ENCODE measurements at regions of chr15 and their contacts with region 1.

Region 1: GRCh38 chr15:89171136-89172072 is 50.0 kb downstream of the RLBP1 start:
- DNase-seq: peak in 1 of 2 donors; percentile 58
- ATAC-seq: no peak
- H3K4me3 ChIP-seq: no peak overlapping the region
- H3K27ac ChIP-seq: peak overlapping the region in 2 of 4 donors; percentile 6 to 61
- H3K4me1 ChIP-seq: peaks cover 28 to 35% of the 10 kb centered on the region in 2 donors
- H3K27me3 ChIP-seq: no peaks in the 10 kb centered on the region
- CTCF ChIP-seq: peak; percentile 50 to 75 (median 66)
- POLR2A ChIP-seq: no peak

Region 2: DNA sequence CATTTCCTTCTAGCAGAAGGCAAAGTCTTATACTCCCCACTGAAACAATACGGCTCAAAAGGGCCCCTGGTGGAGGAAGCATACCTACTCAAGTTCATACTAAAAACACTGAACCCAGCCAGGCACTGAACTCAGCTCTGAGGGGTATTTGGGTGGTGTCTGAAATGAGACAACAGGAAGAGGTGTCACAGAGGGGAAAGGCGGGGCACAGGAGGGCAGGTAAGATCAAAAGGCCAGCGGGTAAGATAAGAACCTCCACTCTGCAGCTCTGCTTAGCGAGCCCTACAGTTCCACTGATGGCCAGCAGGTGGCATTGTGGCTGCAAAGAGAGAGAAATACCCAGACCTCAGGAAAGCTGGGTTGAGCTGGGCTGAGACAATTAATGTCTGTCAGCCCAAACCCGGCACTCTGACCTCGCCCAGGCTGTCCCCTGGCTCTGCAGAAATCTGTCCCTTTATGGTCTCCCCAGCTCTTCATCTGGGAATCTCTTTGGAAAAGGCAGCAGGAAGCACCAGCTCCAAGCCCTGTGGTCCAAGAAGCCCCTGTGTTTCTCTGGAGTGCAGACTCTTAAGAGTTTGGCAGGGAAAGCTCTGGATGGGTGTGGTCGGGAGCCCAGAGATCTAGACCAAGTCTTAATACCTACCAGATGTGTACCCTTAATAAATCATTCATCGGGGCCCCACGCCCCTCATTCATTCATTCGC is 266.6 kb before region 1 on chr15:
- in situ Hi-C with region 1: loop called in 3 of 4 experiments (anchors 10 to 25 kb)
- intact Hi-C with region 1: loop called (anchors 5 kb)
- DNase-seq: peak; percentile 66 to 75
- ATAC-seq: peak; percentile 65 to 69
- H3K4me3 ChIP-seq: no peak overlapping the region
- H3K27ac ChIP-seq: peak overlapping the region; percentile 76 to 99 (median 94)
- H3K4me1 ChIP-seq: peaks cover 50 to 55% of the 10 kb centered on the region in 2 donors
- H3K27me3 ChIP-seq: no peaks in the 10 kb centered on the region
- CTCF ChIP-seq: peak; percentile 94 to 99 (median 97)
- POLR2A ChIP-seq: no peak

Region 3: DNA sequence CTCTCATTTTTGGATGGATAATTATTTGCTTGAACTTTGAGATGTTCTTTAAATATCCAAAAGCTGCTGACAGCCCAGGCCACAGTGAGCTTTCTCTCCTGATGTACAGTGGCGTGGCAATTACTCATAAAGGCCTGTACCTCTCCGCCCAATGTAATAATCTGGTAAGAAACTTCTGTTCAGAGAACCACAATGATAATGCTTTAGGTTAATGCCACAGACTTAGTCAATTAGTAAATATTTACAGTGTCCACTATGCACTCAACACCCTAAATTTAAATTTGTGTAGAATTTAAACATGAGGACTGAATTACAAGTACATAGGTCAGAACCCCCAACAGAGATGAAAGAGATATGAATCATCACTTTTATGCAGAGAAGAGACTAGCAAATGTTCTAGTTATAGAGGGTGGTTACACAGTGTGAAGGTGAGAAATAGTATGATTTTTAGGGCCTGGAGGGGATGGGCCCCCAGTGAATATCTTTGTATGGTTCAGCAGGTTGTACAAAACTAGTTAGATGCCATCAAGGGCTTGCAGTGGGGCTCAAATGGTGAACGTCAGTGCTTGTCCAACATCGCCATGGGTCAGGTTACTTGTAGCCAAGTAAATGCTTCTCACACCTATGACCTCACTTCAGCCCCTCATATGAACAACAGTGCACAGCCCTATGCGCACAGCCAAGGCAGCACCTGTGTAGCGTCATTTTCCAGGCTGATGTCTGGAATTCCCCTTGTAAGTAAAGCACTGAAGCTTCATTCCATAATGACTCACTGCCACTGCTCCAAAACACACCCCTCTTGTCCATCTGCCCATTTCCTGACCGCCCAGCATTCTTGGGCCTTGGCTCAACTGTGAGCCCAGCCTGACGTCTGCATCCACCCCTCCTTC is 69.9 kb before region 1 on chr15:
- in situ Hi-C with region 1: no loop called
- intact Hi-C with region 1: loop called (anchors 5 kb)
- DNase-seq: peak; percentile 82 to 92
- ATAC-seq: peak; percentile 62 to 71
- H3K4me3 ChIP-seq: no peak overlapping the region
- H3K27ac ChIP-seq: peak overlapping the region; percentile 72 to 99 (median 94)
- H3K4me1 ChIP-seq: peaks cover 72 to 93% of the 10 kb centered on the region in 2 donors
- H3K27me3 ChIP-seq: no peaks in the 10 kb centered on the region
- CTCF ChIP-seq: no peak
- POLR2A ChIP-seq: peak in 1 of 2 donors; percentile 38

Region 4: GRCh38 chr15:89139400-89140166 is 31.8 kb before region 1 on chr15:
- in situ Hi-C with region 1: no loop called
- intact Hi-C with region 1: loop called (anchors 2 kb)
- DNase-seq: peak in 1 of 2 donors; percentile 65
- ATAC-seq: peak; percentile 5 to 21
- H3K4me3 ChIP-seq: no peak overlapping the region
- H3K27ac ChIP-seq: peak overlapping the region; percentile 77 to 88 (median 82)
- H3K4me1 ChIP-seq: peaks cover 82 to 93% of the 10 kb centered on the region in 2 donors
- H3K27me3 ChIP-seq: no peaks in the 10 kb centered on the region
- CTCF ChIP-seq: peak in 3 of 5 experiments; percentile 12 to 25 (median 18)
- POLR2A ChIP-seq: no peak

Measured in gastrocnemius medialis (tissue), 4 donors.